ENCODE measurements at regions of chr1 and their contacts with region 1.

Region 1: DNA sequence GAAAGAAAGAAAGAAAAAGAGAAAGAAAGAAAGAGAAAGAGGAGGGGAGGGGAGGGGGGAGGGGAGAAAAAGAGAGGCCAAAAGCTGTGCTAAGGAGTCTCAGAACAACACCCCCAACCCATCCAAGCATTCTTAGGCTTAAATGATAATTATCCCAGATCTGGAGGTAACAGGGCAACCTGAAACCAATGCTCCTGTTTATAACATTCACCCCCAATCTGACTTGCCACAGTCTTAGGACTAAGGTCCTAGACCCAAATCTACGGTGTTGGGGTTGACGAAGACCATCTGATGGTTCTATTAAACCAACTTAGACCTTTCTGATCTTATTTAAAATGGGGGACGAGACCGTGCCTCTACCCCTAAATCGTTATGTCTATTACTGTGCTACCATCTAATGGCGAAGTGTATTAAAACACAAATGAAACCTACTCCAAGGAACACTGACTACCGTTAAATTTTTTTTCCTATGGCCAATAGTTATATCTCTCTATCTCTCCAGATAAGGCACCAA is 119.3 kb upstream of the CDC42BPA start:
- DNase-seq: no peak
- ATAC-seq: peak; percentile 67

Region 2: DNA sequence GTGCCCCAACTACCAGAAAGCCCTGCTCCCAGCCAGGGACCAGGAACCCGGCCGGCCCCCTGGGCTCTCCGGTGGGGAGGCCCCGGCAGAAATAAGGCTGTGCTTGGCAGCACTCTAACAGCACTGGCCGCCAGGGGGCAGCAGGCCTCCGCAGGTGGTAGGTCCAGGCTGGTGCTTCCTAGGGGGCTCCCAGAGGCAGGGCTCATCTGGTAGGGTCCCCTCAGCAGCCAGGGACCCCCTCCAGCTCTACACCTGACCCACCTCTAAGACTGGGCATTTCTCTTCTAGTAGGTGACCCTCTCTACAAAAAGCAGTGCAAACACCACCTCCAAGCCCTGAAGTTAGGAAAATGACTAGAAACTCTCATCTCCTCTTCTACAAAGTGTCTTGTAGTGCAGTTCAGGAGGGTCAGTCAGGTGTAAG is 803.4 kb before region 1 on chr1:
- intact Hi-C with region 1: loop called (anchors 10 kb)
- DNase-seq: peak; percentile 92
- ATAC-seq: peak; percentile 79

Region 3: GRCh38 chr1:226912587-226913176 is 524.9 kb before region 1 on chr1:
- intact Hi-C with region 1: loop called (anchors 10 kb)
- DNase-seq: no peak
- ATAC-seq: peak; percentile 77

Region 4: DNA sequence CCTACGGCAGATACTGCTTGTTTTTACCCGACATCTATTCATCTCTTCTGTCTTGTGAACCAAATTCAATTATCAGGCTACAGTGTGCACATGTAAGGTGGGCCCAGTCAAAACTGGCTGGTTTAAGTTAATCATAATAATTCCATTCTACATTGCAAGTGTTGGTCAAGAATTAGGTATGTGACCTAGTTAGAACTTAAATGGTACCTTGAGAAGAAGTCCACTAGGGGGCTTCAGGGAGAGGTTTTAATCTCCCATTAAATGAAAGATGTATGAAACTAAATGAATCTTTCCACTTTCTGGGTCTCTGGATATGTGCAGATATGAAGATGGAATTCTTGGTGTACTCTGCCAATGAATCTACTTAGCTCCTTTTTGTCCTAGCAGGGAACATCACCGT is 306.4 kb before region 1 on chr1:
- intact Hi-C with region 1: loop called (anchors 5 kb)
- DNase-seq: no peak
- ATAC-seq: no peak

Region 5: DNA sequence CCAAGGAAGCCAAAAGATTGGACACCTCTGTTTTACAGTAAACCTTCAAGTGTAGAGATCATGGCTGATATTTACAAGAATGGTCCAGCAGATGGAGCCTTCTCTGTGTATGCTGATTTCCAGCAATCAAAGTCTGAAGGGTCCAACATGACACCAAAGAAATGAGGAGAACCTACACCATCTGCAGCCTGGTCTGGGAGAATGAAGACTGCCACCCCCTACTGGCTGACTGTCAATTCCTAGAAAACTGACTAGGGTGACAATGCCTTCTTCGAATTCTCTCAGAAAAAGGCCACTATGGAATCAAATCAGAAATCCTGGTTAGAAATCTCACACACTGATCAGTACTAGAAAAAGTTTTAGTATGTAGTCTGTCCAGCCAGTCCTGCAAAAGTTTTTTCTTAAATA is 202.6 kb before region 1 on chr1:
- intact Hi-C with region 1: loop called (anchors 5 kb)
- DNase-seq: no peak
- ATAC-seq: peak; percentile 50

Region 6: DNA sequence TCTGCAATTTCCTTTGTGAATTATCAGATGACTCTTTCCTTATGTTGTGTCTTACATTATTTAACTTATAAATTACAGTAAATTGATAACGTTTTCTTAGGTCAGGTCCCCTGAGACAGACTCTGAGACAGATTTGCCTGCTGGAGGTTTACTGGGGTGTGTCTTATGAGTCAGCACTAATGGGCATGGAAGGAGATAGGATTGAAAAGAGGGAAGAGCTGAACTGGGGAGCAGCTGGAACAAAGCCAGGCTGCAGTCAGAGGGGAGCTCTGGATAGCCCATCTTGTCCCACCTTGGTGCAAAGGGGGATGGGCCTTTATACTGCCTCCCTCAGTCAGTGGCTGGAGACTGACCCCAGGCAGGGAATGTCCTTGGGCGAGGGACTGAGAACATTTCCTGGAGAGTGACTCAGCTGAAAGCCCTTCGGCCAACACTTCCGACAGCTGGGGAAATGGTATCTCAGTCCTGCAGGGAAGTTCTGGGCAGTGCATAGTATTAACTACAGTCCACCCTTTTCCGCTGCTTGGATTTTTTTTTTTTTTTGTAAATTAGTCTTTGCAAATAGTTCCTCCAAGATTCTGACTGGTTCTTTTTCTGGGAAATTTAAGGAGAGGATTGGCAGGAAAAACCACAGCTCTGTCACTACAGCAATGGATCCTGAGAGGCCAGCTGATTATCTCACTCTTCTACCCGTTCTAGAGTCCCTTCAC is 80.2 kb before region 1 on chr1:
- intact Hi-C with region 1: loop called (anchors 5 kb)
- DNase-seq: peak; percentile 73
- ATAC-seq: peak; percentile 98

Region 7: DNA sequence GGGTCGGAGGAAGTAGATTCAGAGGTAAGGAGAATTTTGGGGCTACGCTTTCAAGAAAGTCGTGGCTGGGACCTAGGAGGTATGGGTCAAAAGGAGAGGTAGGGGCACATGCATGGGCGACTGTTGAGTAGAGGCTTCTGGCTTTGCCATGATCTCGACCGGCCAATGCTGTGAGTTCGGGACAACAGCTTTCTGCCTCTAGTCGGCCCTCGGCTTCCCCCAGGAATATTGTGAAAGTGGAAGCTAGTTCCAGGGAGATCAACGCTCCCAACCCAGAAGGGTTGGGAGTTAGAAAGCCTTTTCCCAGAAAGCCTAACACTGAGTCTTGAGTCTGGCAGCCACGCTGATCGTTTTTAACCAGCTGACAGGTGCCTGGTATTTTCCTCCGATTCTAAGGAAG is 194.8 kb after region 1 on chr1:
- intact Hi-C with region 1: no loop called
- DNase-seq: no peak
- ATAC-seq: no peak

Measured in Right ventricle myocardium inferior (tissue), 1 donor.